OCI-LY7 (cell line): ENCODE measurements at regions of chr17 and their contacts with region 1.

Region 1: GRCh38 chr17:27778193-27778592 is 22.1 kb downstream of the NOS2 start:
- DNase-seq: no peak
- H3K4me3 ChIP-seq: no peak overlapping the region
- H3K27ac ChIP-seq: no peak overlapping the region
- H3K4me1 ChIP-seq: peaks cover 7% of the 10 kb centered on the region
- CTCF ChIP-seq: no peak

Region 2: DNA sequence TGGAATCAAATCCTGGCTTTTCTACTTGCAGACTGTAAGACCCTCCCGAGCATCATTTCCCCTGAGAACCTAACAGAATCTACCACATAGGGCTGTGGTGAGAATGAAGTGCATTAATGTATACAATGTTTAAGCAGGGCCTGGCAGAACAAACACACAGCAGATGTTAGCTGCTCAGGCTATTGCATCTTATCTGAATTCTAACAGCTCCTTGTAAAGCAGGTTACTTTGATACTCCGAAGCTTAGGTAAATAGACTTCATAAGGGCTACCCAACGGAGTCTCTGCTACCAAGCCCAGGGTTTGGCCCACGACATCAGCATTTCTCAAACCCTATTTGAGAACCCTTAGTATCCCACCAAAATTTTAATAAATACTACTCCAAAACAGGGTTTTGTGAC is 46.6 kb after region 1 on chr17:
- CTCF ChIA-PET with region 1: no interaction called
- POLR2A ChIA-PET with region 1: no interaction called
- intact Hi-C with region 1: loop called (anchors 10 kb)
- DNase-seq: no peak
- H3K4me3 ChIP-seq: no peak overlapping the region
- H3K27ac ChIP-seq: no peak overlapping the region
- H3K4me1 ChIP-seq: no peaks in the 10 kb centered on the region
- CTCF ChIP-seq: no peak